WTC11 (cell line): ENCODE measurements at regions of chr3 and their contacts with region 1.

Region 1: GRCh38 chr3:100334488-100335351 is at the start of gene NIT2:
- DNase-seq: peak; percentile 95
- ATAC-seq: peak; percentile 96
- H3K4me3 Mint-ChIP-seq: peak within 1 kb of the TSS; percentile 85
- H3K27ac Mint-ChIP-seq: peak within 1 kb of the TSS; percentile 73
- H3K4me1 Mint-ChIP-seq: peaks cover 17% of the 10 kb centered on the region
- H3K27me3 Mint-ChIP-seq: peaks cover 17% of the 10 kb centered on the region
- CTCF ChIP-seq: no peak
- total RNA-seq, gene NIT2: 23.8 to 27.3 TPM (median 24.0 TPM) in 3 replicates

Region 2: DNA sequence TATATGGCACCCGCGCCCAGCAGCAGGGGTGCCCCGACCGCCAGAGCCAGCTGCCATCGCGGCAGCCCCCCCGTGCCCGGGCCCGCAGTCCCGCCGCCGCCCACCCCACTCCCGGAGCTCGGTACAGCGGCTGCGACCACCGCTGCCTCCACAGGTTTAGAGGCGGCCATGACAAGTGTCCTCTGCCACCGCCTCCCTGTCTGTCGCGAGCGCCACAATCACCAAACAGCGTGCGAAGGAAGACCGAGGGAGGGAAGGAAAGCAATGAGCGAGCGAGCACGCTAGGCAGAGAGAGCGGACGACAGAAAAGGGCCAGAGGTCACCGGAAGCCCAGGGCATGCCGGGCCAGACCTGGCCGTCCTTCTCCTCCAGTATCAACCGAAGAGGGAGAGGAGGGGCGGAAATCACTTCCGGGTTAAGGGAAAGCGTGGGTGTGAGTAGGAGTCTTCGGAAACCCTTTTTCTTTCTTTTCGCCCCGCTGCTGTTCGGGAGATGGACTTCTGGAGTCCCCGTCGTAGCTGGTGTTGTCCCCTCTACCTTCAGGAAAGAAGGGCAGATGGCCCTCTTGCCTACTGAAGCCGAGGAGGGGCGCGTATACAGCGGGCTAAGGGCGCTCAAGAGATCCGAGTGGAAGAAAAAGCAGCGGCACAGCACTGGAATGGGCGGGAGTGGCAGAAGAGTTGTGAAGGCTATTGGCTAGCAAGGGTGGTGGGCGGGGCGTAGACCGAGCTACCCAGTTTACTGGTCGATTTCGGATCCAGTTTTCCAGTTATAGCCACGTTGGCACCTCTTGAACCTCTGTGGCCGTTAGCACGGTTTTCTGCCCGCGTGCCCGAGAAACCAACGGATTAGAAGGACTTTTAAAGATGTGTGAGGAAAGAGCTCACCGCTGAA is 66.3 kb after region 1 on chr3 and contains the starts of genes LNP1 and TOMM70:
- CTCF ChIA-PET with region 1: interaction called, 4 read pairs
- POLR2A ChIA-PET with region 1: interaction called, 15 read pairs
- DNase-seq: peak; percentile 97
- ATAC-seq: peak; percentile 94
- H3K4me3 Mint-ChIP-seq: peak within 1 kb of the TSS; percentile 94
- H3K27ac Mint-ChIP-seq: peak within 1 kb of the TSS; percentile 99
- H3K4me1 Mint-ChIP-seq: peaks cover 36% of the 10 kb centered on the region
- H3K27me3 Mint-ChIP-seq: no peaks in the 10 kb centered on the region
- CTCF ChIP-seq: no peak
- total RNA-seq, gene LNP1: 6.7 to 7.9 TPM (median 6.8 TPM) in 3 replicates
- total RNA-seq, gene TOMM70: 46.8 to 59.2 TPM (median 47.7 TPM) in 3 replicates